Dendritic cell treated with granulocyte-macrophage colony-stimulating factor and Interleukin-4, amounts not matched to agents 40 ng/mL and 50 ng/mL, for 4 days (primary cell): ENCODE measurements at regions of chr7 and their contacts with region 1.

Region 1: GRCh38 chr7:18352339-18353255 is 143.0 kb upstream of the HDAC9 start:
- H3K4me3 Mint-ChIP-seq: no peak overlapping the region
- H3K27ac Mint-ChIP-seq: no peak overlapping the region
- H3K4me1 Mint-ChIP-seq: peaks cover 20% of the 10 kb centered on the region
- H3K27me3 Mint-ChIP-seq: no peaks in the 10 kb centered on the region

Region 2: GRCh38 chr7:17725796-17726195 is 626.8 kb before region 1 on chr7:
- intact Hi-C with region 1: no loop called
- H3K4me3 Mint-ChIP-seq: no peak overlapping the region
- H3K27ac Mint-ChIP-seq: no peak overlapping the region
- H3K4me1 Mint-ChIP-seq: peaks cover 5% of the 10 kb centered on the region
- H3K27me3 Mint-ChIP-seq: no peaks in the 10 kb centered on the region

Region 3: DNA sequence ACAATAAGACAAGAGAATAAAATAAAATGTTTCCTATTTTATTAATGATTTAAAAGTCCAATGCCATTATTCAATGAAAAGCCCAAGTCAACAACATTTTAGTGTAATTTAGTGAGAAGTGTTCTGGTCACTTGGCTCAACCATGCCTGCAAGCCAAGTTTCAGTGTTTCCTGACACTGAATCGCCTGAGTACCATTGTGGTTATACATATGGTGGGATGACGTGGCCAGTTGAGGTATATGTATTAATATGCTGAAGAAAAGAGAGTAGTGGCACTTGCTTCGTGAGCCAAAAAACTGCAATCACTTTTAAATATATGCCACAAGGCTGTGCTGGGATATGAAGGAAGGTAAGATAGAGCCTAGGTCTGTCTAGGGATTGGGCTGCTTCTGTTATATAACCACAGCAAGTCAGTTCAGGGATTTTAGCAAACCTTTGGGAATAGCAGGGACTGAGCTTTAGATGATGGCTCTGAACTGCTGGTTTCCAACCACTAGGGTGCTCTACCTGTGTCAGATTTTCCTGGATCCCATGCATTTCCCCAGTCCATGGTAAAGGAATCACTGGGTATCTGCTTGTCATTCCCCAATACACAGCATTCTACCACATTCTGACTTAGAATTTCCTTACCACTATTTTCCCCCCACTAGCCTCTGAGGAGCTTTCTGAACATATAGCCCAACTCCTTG is 110.9 kb before region 1 on chr7:
- intact Hi-C with region 1: no loop called
- H3K4me3 Mint-ChIP-seq: no peak overlapping the region
- H3K27ac Mint-ChIP-seq: no peak overlapping the region
- H3K4me1 Mint-ChIP-seq: no peaks in the 10 kb centered on the region
- H3K27me3 Mint-ChIP-seq: no peaks in the 10 kb centered on the region

Region 4: DNA sequence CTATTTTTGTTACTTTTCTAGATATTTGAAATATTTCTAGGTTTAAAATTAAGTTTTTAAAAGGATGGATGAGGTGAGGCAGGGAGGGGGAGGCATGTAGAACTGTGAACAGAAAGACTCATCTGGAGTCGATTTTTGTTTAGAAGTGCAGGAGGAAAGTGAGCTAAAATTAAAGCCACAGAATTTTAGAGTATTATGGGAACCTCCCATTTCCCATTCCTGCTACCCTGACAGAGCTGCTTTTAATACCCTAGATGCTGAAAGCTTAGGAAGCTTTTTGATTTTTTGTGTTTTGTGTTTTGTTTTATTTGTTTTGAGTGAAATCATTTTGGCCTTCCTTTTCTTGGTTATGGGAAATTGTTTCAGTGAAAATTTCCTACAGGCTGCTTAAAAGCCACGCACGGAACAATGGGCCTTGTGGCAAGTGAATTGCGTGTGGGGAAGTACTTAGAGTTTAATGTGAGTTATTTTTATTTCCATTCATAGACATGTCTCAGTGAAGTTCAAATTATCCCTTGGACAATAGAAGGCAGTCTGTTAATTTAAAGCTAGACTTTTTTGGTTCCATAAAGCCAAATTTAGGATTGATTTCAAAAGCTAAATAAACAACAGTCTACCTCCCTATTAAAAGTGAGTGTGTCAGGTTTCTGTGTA is 41.0 kb after region 1 on chr7:
- intact Hi-C with region 1: loop called (anchors 5 kb)
- H3K4me3 Mint-ChIP-seq: no peak overlapping the region
- H3K27ac Mint-ChIP-seq: peak overlapping the region; percentile 83
- H3K4me1 Mint-ChIP-seq: peaks cover 50% of the 10 kb centered on the region
- H3K27me3 Mint-ChIP-seq: no peaks in the 10 kb centered on the region

Region 5: GRCh38 chr7:18570890-18571478 is 218.4 kb after region 1 on chr7:
- intact Hi-C with region 1: loop called (anchors 1 kb)
- H3K4me3 Mint-ChIP-seq: no peak overlapping the region
- H3K27ac Mint-ChIP-seq: no peak overlapping the region
- H3K4me1 Mint-ChIP-seq: peaks cover 2% of the 10 kb centered on the region
- H3K27me3 Mint-ChIP-seq: no peaks in the 10 kb centered on the region

Region 6: GRCh38 chr7:18666107-18666728 is 313.6 kb after region 1 on chr7:
- intact Hi-C with region 1: loop called (anchors 2 kb)
- H3K4me3 Mint-ChIP-seq: no peak overlapping the region
- H3K27ac Mint-ChIP-seq: no peak overlapping the region
- H3K4me1 Mint-ChIP-seq: peaks cover 5% of the 10 kb centered on the region
- H3K27me3 Mint-ChIP-seq: no peaks in the 10 kb centered on the region

Region 7: DNA sequence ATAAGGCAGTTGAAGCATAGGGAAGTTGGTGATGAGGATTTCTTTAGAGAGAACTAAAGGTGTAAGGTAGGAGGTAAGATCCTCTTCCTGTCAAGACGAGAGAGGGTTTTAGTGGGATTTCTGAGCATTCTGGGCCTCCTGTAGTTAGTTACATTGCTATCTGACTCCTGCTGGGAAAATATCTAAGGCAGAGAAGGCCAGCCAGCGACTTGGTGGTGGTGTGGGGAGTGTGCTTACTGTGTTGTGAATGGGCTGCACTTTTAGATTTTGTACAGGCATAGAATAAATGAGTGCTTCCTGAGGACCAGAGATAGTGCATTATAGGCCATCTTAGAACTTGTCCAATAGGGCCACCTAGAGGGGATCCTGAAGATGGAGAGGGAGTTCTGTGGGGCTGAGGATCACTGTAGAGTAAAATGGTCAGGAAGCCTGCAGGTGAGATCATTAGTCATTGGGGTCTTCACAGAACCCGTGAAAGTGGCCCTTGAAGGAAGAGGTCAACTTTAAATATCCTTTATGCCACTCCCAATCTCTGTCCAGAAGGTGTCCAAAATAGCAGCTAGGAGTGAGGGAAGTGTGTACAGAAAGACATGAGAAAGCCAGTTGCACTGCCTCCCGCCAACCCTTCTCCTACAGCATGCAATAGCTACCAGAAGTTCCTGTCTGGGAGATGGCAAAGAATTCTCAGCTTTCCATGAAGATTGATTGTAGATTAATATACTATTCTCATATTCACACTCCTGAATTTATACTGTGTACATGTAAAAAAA is 1089.6 kb after region 1 on chr7:
- intact Hi-C with region 1: loop called (anchors 10 kb)
- H3K4me3 Mint-ChIP-seq: no peak overlapping the region
- H3K27ac Mint-ChIP-seq: no peak overlapping the region
- H3K4me1 Mint-ChIP-seq: peaks cover 19% of the 10 kb centered on the region
- H3K27me3 Mint-ChIP-seq: no peaks in the 10 kb centered on the region